ENCODE measurements at regions of chr9 and their contacts with region 1.

Region 1: DNA sequence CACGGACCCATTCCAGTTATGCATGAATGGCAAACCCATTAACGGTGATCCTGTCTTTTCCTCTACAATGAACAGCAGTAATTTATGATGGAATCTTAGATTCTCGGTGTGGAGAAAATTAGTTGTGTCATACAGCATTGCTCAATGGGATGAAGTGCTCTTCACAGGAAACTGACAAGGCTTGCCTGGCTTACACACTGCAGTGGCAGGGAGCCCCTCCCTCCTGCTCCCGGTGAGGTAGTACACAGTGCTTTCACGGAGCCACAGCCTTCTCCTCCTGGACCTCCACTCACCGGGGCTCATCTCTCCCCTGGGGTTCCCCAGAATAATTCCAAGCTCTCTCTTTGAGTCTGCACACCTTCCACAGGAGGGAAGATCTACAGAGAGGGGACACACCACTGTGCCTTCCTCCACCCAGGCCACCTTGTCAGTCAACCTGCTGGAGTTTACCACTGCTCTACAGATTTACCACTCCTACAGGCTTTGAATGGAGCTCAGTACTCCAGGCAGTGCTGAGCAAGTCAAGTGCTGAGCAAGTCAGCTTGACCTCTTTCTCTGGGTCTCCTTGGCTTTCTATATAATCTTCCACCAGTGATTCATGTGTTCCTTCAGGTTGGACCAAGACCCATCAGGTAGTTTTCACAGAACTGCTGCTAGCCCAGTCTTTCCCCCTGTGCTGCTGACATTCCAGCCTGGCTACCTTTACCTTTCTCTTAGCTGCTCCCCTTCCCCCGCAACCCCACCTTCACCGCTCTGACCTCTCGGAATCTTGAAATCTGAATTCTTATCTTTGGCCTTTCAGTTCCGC is 59.1 kb upstream of the TBC1D2 start:
- DNase-seq: no peak
- ATAC-seq: no peak
- H3K4me3 ChIP-seq: no peak overlapping the region
- H3K27ac ChIP-seq: no peak overlapping the region
- H3K4me1 ChIP-seq: no peaks in the 10 kb centered on the region
- H3K27me3 ChIP-seq: no peaks in the 10 kb centered on the region
- CTCF ChIP-seq: no peak
- POLR2A ChIP-seq: no peak

Region 2: DNA sequence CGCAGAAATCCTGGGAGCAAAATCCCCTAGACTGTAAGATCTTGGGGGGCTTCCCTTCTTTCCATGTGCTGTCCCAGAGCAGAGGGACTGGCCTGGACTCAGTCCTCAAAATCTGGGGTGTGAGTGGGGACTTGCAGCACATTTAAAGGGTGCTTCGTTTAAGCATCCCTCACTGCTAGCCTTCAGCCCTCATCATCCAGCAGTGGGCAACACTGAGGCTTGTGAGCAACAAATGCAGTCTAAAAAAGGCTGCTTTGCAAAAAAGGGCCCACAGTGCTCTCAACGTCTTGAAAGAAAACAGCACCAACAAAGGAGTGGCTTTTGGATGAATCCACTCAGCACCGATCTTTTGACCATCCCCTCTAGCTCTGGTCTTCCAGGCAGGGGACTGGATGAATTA is 69.2 kb after region 1 on chr9:
- intact Hi-C with region 1: no loop called
- DNase-seq: no peak
- ATAC-seq: no peak
- H3K4me3 ChIP-seq: no peak overlapping the region
- H3K27ac ChIP-seq: no peak overlapping the region
- H3K4me1 ChIP-seq: peaks cover 6% of the 10 kb centered on the region
- H3K27me3 ChIP-seq: no peaks in the 10 kb centered on the region
- CTCF ChIP-seq: no peak
- POLR2A ChIP-seq: no peak

Region 3: GRCh38 chr9:98730871-98731270 is 416.3 kb after region 1 on chr9:
- intact Hi-C with region 1: no loop called
- DNase-seq: no peak
- ATAC-seq: no peak
- H3K4me3 ChIP-seq: no peak overlapping the region
- H3K27ac ChIP-seq: no peak overlapping the region
- H3K4me1 ChIP-seq: no peaks in the 10 kb centered on the region
- H3K27me3 ChIP-seq: no peaks in the 10 kb centered on the region
- CTCF ChIP-seq: no peak
- POLR2A ChIP-seq: no peak

Region 4: GRCh38 chr9:98775831-98776441 is 461.4 kb after region 1 on chr9:
- intact Hi-C with region 1: loop called (anchors 5 kb)
- DNase-seq: peak in 2 of 4 donors; percentile 29 to 31
- ATAC-seq: no peak
- H3K4me3 ChIP-seq: no peak overlapping the region
- H3K27ac ChIP-seq: no peak overlapping the region
- H3K4me1 ChIP-seq: no peaks in the 10 kb centered on the region
- H3K27me3 ChIP-seq: no peaks in the 10 kb centered on the region
- CTCF ChIP-seq: peak; percentile 7 to 47 (median 44)
- POLR2A ChIP-seq: no peak

Measured in body of pancreas (tissue), 4 donors.